ENCODE measurements at regions of chrX and their contacts with region 1.

Region 1: DNA sequence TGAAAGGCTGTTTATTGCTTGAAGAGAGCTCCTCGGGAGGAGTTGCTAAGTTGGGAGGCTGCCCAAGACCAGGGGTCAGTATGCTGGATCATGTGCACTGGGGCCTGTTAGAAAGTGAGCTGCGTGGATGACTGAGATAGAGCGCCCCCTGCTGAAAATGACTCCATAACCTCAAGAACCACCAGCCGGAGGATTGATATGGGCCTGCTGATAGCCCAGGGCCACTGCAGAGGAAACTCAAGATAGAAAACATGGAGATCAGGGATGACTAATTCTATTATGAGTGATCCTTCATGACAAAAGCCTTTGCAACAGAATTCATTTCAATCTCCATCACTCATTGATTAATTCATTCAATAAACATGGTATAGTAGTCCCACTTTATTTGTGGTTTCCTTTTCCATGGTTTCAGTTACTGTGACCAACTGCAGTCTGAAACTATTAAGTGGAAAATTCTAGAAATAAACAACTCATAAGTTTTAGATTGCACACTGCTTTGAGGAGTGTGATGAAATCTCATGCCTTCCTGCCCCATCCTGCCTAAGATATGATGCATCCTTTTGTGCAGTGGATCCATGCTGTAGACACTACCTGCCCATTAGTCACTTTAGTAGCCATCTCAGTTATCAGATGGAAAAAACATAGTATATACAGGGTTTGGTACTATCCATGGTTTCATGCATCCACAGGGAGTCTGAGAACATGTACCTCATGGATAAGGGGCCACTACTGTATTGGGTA is 126.7 kb upstream of the MBNL3 start:
- DNase-seq: peak; percentile 57
- H3K4me3 Mint-ChIP-seq: no peak overlapping the region
- H3K27ac Mint-ChIP-seq: no peak overlapping the region
- H3K4me1 Mint-ChIP-seq: no peaks in the 10 kb centered on the region
- H3K27me3 Mint-ChIP-seq: no peaks in the 10 kb centered on the region

Region 2: DNA sequence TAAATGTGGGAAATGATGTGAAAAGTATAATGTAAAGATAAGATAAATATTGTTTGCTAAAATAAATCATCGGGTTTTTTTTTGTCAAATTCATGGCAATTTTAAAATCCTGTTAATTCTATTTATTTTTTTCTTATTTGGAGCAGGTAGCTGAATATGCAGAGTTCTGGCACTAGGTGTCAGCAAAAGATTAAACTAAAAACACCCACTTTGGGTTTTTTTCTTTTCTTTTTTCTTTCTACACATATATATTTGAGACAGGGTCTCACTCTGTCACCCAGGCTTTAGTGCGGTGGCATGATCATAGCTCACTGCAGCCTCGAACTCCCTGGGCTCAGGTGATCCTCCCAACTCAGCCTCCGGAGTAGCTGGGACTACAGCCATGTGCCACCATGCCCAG is 389.4 kb before region 1 on chrX:
- CTCF ChIA-PET with region 1: interaction called, 15 read pairs
- POLR2A ChIA-PET with region 1: no interaction called
- intact Hi-C with region 1: loop called (anchors 2 kb)
- DNase-seq: no peak
- H3K4me3 Mint-ChIP-seq: no peak overlapping the region
- H3K27ac Mint-ChIP-seq: no peak overlapping the region
- H3K4me1 Mint-ChIP-seq: peaks cover 10% of the 10 kb centered on the region
- H3K27me3 Mint-ChIP-seq: no peaks in the 10 kb centered on the region

Region 3: GRCh38 chrX:132858018-132858417 is 242.5 kb after region 1 on chrX:
- CTCF ChIA-PET with region 1: no interaction called
- POLR2A ChIA-PET with region 1: no interaction called
- intact Hi-C with region 1: no loop called
- DNase-seq: no peak
- H3K4me3 Mint-ChIP-seq: no peak overlapping the region
- H3K27ac Mint-ChIP-seq: no peak overlapping the region
- H3K4me1 Mint-ChIP-seq: peaks cover 10% of the 10 kb centered on the region
- H3K27me3 Mint-ChIP-seq: no peaks in the 10 kb centered on the region